ENCODE measurements at regions of chr6 and their contacts with region 1.

Region 1: DNA sequence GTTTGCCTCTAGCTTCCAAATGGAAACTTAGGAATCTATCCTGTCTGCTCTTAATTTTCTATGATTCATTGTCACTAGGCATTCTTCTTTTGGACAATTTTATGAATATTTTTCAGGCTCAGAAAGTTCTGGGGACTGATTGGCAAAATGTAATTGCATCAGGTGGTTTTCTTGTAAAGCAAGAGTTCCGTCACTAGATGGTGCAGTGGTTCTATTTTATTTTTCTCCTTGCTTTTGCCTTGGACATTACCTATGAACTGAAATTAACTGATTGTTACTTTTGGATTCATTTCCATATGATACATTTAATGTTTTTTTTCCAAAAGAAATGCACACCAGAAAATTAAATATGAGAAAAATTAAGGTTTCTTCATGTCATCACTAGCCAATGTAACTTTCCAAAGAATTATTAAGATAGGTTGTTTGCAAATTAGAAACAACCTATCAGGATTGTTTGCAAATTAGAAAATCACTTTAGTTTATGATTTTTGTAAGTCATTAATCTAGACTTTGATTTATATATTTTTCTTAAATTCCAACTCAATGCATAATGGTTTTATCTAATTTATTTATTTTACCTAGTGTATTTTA is 48.0 kb downstream of the TMEM170B start:
- DNase-seq: peak in 1 of 4 donors; percentile 65
- ATAC-seq: peak; percentile 69
- H3K4me3 ChIP-seq: no peak overlapping the region
- H3K27ac ChIP-seq: no peak overlapping the region
- H3K4me1 ChIP-seq: peaks cover 7 to 33% of the 10 kb centered on the region in 2 donors
- H3K27me3 ChIP-seq: no peaks in the 10 kb centered on the region
- CTCF ChIP-seq: peak; percentile 53 to 59

Region 2: GRCh38 chr6:12605888-12606345 is 1020.4 kb after region 1 on chr6:
- intact Hi-C with region 1: loop called in 1 of 2 experiments (anchors 10 kb)
- DNase-seq: peak in 3 of 4 donors; percentile 23 to 71 (median 35)
- ATAC-seq: peak; percentile 89
- H3K4me3 ChIP-seq: no peak overlapping the region
- H3K27ac ChIP-seq: no peak overlapping the region
- H3K4me1 ChIP-seq: peaks cover 0 to 23% of the 10 kb centered on the region in 2 donors
- H3K27me3 ChIP-seq: no peaks in the 10 kb centered on the region
- CTCF ChIP-seq: peak; percentile 46 to 48